ENCODE measurements at regions of chr11 and their contacts with region 1.

Region 1: DNA sequence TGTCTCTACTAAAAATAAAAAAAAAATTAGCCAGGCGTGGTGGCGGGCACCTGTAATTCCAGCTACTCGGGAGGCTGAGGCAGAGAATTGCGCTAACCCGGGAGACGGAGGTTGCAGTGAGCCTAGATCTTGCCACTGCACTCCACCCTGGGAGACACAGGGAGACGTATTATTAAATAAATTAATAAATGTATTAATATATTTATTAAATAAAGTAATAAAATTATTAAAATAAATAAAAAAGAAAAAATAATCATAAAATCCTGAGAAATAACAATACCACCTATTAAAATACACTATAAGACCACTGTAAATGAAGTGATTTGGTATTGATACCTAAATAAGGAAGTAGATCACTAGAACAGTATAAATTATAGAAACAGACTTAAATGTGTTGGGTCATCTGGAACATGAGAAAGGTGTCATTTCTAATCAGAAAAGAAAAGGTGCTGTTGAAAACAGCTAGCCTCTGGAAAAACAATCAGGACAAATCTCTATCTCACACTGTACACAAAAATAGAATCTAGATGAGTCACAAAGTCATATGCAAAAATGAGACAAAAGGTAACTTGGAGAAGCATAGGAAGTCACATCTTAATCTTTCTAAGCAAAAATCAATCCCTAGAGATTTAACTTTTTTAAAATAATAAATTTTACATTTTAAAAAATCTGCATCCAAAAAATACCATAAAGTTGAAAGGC is 43.2 kb upstream of the UBASH3B start:
- DNase-seq: peak; percentile 39
- ATAC-seq: peak; percentile 55; the same call in 1 of the 2 replicates
- H3K4me3 ChIP-seq: no peak overlapping the region
- H3K27ac ChIP-seq: no peak overlapping the region
- H3K4me1 ChIP-seq: peaks cover 3% of the 10 kb centered on the region; the same call in 1 of the 2 replicates
- H3K27me3 ChIP-seq: no peaks in the 10 kb centered on the region
- CTCF ChIP-seq: no peak

Region 2: DNA sequence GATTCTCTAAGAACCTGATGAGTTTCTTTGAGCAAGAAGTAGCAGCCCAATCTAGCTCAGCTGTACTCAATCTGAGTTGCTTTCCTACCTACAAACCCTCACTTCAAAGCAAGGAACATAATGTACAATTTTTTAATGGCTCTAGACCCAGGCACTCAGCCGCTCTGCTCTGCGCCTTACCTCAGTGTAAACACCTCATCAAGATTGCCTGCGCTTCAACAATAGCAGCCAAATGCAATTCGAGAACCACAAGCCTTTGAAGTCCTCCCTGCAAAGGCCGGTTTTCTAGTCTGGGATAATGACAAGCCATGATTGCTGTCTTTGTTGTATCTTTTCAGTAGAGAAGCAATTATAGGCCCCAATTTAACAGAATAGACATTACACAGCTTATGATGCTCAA is 308.3 kb after region 1 on chr11:
- CTCF ChIA-PET with region 1: no interaction called
- POLR2A ChIA-PET with region 1: interaction called, 10 read pairs
- intact Hi-C with region 1: no loop called
- DNase-seq: no peak
- ATAC-seq: no peak
- H3K4me3 ChIP-seq: no peak overlapping the region
- H3K27ac ChIP-seq: no peak overlapping the region
- H3K4me1 ChIP-seq: 0 out of 2 replicates have a peak, but pooled peaks cover 3% of the 10 kb centered on the region
- H3K27me3 ChIP-seq: no peaks in the 10 kb centered on the region
- CTCF ChIP-seq: no peak

Region 3: DNA sequence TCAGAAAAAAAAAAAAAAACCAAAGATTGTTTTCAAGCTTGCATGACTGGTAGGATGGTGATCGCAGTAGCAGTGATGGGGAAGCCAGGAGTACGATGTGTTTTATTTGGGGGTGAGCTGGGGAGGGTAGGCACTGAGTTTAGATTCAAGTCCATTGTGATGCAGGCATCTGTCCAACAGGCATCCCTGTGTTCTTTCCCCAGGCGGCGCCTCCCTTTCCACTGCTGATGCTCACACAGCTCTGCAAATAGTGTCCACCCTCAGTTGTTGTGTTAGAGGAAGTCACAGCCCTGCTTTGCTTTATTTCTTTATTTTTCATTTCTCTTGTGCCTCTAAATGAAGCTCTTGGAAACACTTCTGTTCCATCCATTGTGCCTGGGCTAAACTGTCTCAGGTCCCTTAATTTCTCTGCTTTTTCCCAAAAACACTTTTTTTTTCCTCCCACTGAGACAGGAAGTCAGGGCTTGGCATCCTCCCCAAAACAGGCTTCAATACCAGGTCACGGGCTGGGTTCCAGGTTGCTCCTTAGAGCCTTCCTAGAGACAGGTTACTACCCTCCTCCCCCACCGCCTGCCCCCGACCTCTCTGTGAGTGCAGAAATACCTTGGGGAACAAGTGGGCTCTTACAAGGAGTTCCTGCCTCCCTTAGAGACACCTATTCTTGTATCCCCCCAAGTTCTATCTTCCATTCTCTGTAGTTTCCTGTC is 488.3 kb after region 1 on chr11:
- CTCF ChIA-PET with region 1: no interaction called
- POLR2A ChIA-PET with region 1: no interaction called
- intact Hi-C with region 1: no loop called
- DNase-seq: no peak
- ATAC-seq: no peak; the same call in 1 of the 2 replicates
- H3K4me3 ChIP-seq: no peak overlapping the region
- H3K27ac ChIP-seq: no peak overlapping the region
- H3K4me1 ChIP-seq: 0 out of 2 replicates have a peak, but pooled peaks cover 4% of the 10 kb centered on the region
- H3K27me3 ChIP-seq: no peaks in the 10 kb centered on the region
- CTCF ChIP-seq: no peak

Measured in PC-3 (cell line).